Caco-2 (cell line): ENCODE measurements at regions of chr17 and their contacts with region 1.

Region 1: GRCh38 chr17:21419299-21420239 is 43.4 kb downstream of the KCNJ12 start:
- DNase-seq: peak in 1 of 2 experiments; percentile 33
- H3K4me3 ChIP-seq: no peak overlapping the region
- H3K4me3 Mint-ChIP-seq: no peak overlapping the region
- H3K27ac Mint-ChIP-seq: no peak overlapping the region
- H3K4me1 ChIP-seq: no peaks in the 10 kb centered on the region
- H3K4me1 Mint-ChIP-seq: no peaks in the 10 kb centered on the region
- H3K27me3 ChIP-seq: no peaks in the 10 kb centered on the region
- H3K27me3 Mint-ChIP-seq: peaks cover 3% of the 10 kb centered on the region
- CTCF ChIP-seq: no peak

Region 2: DNA sequence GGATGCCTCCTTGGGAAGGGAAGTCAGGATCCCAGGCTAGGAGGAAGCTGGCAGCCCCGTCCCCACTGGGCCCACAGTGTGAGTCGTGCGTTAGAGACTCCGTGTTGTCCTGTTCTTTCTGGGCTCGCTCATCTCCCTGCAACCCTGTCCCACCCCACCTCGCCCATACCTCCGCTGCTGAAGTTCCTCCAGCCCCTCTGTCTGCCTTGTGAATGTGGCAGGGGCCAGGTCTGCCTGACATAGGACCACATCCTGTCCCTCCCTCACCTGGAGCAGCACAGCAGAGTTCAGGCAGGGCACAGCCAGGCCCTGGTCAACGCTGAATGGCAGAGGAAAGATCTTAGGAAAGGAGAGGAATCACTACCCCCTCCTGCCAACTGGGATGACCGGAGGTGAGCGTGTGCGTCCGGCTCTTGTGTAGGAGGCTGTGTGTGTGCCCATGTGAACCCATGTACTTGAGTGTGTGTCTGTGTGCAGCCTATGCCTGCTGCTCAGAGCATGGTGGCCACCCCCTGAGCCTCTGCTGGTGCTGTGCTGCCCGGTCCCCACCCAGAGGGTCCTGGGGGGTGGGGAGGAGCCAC is 285.5 kb after region 1 on chr17:
- CTCF ChIA-PET with region 1: no interaction called
- POLR2A ChIA-PET with region 1: no interaction called
- intact Hi-C with region 1: loop called (anchors 5 kb)
- DNase-seq: peak in 1 of 2 experiments; percentile 26
- H3K4me3 ChIP-seq: no peak overlapping the region
- H3K4me3 Mint-ChIP-seq: no peak overlapping the region
- H3K27ac Mint-ChIP-seq: no peak overlapping the region
- H3K4me1 ChIP-seq: no peaks in the 10 kb centered on the region
- H3K4me1 Mint-ChIP-seq: no peaks in the 10 kb centered on the region
- H3K27me3 ChIP-seq: no peaks in the 10 kb centered on the region
- H3K27me3 Mint-ChIP-seq: no peaks in the 10 kb centered on the region
- CTCF ChIP-seq: no peak